ENCODE measurements at regions of chr2 and their contacts with region 1.

Region 1: GRCh38 chr2:68909793-68910674 is 38.8 kb upstream of the BMP10 start:
- DNase-seq: peak; percentile 78
- ATAC-seq: peak; percentile 45 to 61

Region 2: DNA sequence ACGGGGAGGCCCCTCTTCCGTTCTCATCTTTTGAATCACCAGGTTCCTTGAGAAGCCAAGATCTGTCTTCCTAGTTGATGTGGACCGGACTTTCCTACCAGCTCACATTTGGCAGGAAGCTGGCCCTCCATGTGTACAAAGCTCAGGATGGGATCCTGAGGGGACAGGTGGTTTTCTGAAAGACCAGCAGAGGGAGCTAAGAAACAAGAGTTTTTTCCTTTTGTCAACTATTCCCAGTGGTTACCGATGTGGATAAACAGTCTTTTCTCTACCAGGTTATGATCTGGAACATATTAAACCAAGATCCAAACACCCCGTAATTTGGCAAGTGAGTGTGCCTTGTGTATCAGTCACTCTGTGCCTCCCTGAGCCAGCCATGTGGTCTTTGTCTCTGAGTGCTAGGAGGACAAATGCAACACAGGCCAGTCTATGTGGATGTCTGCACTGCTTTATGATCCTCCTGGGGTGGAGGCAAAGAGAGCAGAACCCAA is 200.6 kb before region 1 on chr2:
- intact Hi-C with region 1: loop called in 1 of 2 experiments (anchors 5 kb)
- DNase-seq: no peak
- ATAC-seq: peak; percentile 59 to 71

Region 3: GRCh38 chr2:68751397-68752339 is 158.4 kb before region 1 on chr2:
- intact Hi-C with region 1: loop called (anchors 2 to 5 kb)
- DNase-seq: peak; percentile 93
- ATAC-seq: peak; percentile 95

Measured in left cardiac atrium (tissue), 4 donors.